ENCODE measurements at regions of chr3 and their contacts with region 1.

Region 1: GRCh38 chr3:193772422-193772763 is 179.4 kb downstream of the OPA1 start:
- DNase-seq: no peak
- H3K4me3 ChIP-seq: no peak overlapping the region
- H3K27ac ChIP-seq: no peak overlapping the region
- H3K4me1 ChIP-seq: no peaks in the 10 kb centered on the region
- H3K27me3 ChIP-seq: no peaks in the 10 kb centered on the region
- CTCF ChIP-seq: no peak

Region 2: GRCh38 chr3:193711964-193712598 is 60.3 kb before region 1 on chr3:
- CTCF ChIA-PET with region 1: no interaction called
- dilution Hi-C with region 1: loop called (anchors 5 kb)
- in situ Hi-C with region 1: no loop called
- intact Hi-C with region 1: no loop called
- DNase-seq: no peak
- H3K4me3 ChIP-seq: no peak overlapping the region
- H3K27ac ChIP-seq: no peak overlapping the region
- H3K4me1 ChIP-seq: no peaks in the 10 kb centered on the region
- H3K27me3 ChIP-seq: no peaks in the 10 kb centered on the region
- CTCF ChIP-seq: no peak

Measured in mammary epithelial cell (primary cell).